Uterus (tissue), 4 donors: ENCODE measurements at regions of chr1 and their contacts with region 1.

Region 1: DNA sequence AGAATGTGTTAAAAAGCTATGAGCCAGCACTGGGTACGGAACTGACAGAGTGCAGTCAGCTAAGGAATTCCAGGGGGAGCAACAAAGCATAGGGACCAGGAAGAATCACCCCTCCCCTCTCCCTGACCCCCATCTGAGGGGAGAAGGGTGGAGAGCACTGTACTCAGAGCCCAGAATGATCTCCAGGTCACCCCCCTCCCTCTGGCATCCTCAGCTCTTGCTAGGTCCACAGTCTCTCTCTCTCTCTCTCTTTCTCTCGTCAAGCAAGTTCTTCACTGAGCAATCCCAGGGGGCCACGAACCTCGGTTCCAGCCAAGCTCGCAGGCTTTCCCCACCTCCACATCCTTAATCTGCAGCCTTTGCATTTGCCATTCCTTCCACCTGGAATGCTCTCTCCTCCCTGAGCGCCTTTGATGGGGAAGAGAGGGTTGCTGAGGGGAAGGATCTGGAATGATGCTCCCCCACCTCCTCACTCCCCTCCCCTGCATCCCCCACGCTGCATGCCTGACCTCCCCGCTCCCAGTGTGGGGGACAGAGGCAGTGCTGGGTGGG is 6.7 kb upstream of the WASF2 start:
- DNase-seq: peak; percentile 59 to 72
- H3K4me3 ChIP-seq: no peak overlapping the region
- H3K27ac ChIP-seq: peak overlapping the region; percentile 66 to 72
- H3K4me1 ChIP-seq: peaks cover 4% of the 10 kb centered on the region in 2 donors
- H3K27me3 ChIP-seq: no peaks in the 10 kb centered on the region
- CTCF ChIP-seq: peak; percentile 32 to 68 (median 52)
- POLR2A ChIP-seq: no peak

Region 2: GRCh38 chr1:27556781-27557595 is 60.3 kb after region 1 on chr1:
- intact Hi-C with region 1: loop called (anchors 2 kb)
- DNase-seq: peak; percentile 95 to 97
- H3K4me3 ChIP-seq: peak overlapping the region in 1 of 2 donors; percentile 15
- H3K27ac ChIP-seq: peak overlapping the region; percentile 88 to 93
- H3K4me1 ChIP-seq: peaks cover 25 to 43% of the 10 kb centered on the region in 2 donors
- H3K27me3 ChIP-seq: no peaks in the 10 kb centered on the region
- CTCF ChIP-seq: peak; percentile 87 to 92 (median 91)
- POLR2A ChIP-seq: peak in 1 of 2 donors; percentile 12

Region 3: DNA sequence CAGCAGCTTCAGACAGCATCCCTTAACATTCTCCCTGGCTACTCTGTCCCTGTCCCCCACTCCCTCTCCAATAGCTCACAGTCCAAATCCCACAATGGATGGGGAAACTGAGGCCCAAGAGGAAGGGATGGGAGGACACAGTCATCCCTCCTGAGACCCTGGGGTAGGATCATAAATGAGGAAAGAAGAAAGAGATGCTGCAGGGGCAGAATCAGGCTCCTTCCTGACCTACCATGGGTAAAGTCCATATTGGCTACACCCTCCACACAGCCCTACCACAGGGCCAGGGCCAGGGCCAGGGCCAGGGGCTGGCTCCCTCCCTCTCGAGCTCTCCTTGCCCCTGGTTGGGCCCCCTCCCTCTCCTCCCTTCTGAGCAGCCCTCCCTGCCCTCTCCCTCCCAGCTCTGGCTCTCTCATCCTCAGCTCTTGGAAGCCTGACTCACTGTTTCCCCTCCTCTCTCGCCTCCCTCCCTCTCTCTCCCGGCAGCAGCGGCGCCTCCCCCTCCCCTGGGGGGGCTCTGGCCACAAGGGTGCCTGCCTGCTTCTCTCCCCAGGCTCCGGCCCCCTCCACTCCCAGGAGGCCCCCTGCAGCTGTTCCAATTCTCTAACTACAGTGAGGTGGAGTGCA is 102.3 kb after region 1 on chr1:
- intact Hi-C with region 1: no loop called
- DNase-seq: peak; percentile 87 to 88
- H3K4me3 ChIP-seq: peak overlapping the region in 1 of 2 donors; percentile 20
- H3K27ac ChIP-seq: peak overlapping the region; percentile 92 to 99
- H3K4me1 ChIP-seq: peaks cover 0 to 57% of the 10 kb centered on the region in 2 donors
- H3K27me3 ChIP-seq: no peaks in the 10 kb centered on the region
- CTCF ChIP-seq: no peak
- POLR2A ChIP-seq: peak; percentile 20 to 28